ENCODE measurements at regions of chr4 and their contacts with region 1.

Region 1: DNA sequence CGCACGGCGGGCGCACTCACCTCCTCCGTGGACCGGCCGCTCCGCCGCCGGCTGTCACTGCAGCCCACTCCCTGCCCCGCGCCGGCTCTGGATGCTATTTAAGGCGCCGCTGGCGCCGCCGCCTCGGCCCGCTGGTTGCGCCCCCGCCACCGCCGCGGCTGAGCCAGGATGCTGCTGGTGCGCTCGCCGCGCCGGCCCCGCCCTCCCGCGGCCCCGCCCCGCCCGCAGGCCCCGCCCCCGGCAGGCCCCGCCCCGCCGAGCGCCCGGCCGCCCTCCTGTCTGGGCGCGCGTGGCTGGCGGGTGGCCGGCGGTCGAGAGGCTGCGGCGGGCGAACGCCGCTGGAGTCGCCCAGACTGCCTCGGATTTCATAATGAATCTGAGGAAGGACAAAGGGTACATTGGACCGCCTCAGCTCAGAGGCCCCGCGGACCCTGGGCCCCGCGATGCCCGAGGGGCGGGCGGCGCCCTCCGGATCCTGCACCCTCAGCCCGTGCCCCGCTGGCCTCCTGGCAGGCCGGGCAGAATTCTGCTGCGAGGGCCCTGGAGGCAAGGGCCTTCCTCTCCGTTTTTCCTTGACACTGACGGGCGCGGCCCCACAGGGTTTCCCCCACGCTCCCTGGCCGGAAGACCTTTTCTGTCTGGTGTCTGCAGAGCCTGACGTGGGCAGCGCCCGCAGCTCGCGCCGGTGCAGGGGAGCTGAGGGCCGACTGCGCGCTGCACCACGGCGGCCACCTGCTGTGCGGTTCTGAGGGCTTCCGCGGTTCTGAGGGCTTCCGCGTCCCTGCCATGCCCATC is at the start of gene ACSL1:
- DNase-seq: peak; percentile 48 to 88 (median 77)
- ATAC-seq: peak; percentile 84
- H3K4me3 ChIP-seq: peak within 1 kb of the TSS; percentile 56 to 78
- H3K4me3 Mint-ChIP-seq: peak within 1 kb of the TSS; percentile 91
- H3K27ac ChIP-seq: peak within 1 kb of the TSS; percentile 31 to 54
- H3K27ac Mint-ChIP-seq: peak within 1 kb of the TSS; percentile 90
- H3K4me1 ChIP-seq: peaks cover 22% of the 10 kb centered on the region
- H3K4me1 Mint-ChIP-seq: peaks cover 39% of the 10 kb centered on the region
- H3K27me3 ChIP-seq: no peaks in the 10 kb centered on the region
- H3K27me3 Mint-ChIP-seq: no peaks in the 10 kb centered on the region
- CTCF ChIP-seq: no peak
- total RNA-seq, gene ACSL1: 18.4 to 21.3 TPM

Region 2: DNA sequence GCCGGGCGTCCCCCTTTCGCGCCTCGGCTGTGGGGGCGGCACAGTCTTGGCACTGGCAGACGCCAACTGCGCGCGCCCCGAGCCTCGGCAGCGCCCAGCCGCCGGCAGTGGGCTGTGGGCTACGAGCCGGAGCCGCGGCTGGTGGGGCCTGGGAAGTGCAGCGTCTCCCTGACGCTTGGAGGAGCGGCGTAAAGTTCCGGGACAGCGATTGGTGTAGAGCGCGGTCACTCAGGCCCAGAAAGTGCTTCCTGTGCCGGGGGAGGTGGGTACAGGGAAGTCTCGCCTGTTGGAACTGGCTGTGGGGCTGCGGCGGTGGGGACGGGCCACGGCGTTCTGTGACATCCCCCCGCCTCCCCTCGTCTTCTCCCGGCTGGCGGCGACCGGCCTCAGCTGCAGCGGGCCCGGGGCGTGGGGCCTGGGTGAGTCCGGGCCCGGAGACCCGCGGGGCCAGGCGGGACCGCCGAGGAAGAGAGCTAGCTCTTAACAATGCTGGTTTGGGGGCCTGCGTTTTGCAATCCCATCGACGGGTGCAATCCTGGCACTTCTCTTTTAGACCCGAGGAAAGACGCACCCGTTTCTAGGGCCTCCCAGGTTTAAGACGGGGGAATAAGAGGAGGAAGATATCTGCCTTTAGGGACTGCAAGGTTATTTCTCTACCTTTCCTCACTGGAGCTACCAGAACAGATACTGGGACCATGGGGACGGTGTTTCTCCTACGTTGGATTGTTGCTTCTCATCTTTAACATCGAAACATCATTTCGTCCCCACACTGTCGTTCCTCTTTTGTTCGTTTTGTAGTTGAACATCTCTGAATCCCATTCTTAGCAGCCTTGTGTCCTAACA is 1166.8 kb before region 1 on chr4 and contains the starts of genes RWDD4 and TRAPPC11:
- CTCF ChIA-PET with region 1: no interaction called
- POLR2A ChIA-PET with region 1: no interaction called
- intact Hi-C with region 1: loop called in 1 of 2 experiments (anchors 5 kb)
- DNase-seq: peak; percentile 90 to 99 (median 95)
- ATAC-seq: peak; percentile 96
- H3K4me3 ChIP-seq: peak within 1 kb of the TSS; percentile 72 to 83
- H3K4me3 Mint-ChIP-seq: peak within 1 kb of the TSS; percentile 92
- H3K27ac ChIP-seq: peak within 1 kb of the TSS; percentile 83 to 89
- H3K27ac Mint-ChIP-seq: peak within 1 kb of the TSS; percentile 91
- H3K4me1 ChIP-seq: peaks cover 25% of the 10 kb centered on the region
- H3K4me1 Mint-ChIP-seq: peaks cover 42% of the 10 kb centered on the region
- H3K27me3 ChIP-seq: no peaks in the 10 kb centered on the region
- H3K27me3 Mint-ChIP-seq: no peaks in the 10 kb centered on the region
- CTCF ChIP-seq: no peak
- total RNA-seq, gene RWDD4: 9.0 to 12.1 TPM
- total RNA-seq, gene TRAPPC11: 14.7 to 22.1 TPM

Region 3: DNA sequence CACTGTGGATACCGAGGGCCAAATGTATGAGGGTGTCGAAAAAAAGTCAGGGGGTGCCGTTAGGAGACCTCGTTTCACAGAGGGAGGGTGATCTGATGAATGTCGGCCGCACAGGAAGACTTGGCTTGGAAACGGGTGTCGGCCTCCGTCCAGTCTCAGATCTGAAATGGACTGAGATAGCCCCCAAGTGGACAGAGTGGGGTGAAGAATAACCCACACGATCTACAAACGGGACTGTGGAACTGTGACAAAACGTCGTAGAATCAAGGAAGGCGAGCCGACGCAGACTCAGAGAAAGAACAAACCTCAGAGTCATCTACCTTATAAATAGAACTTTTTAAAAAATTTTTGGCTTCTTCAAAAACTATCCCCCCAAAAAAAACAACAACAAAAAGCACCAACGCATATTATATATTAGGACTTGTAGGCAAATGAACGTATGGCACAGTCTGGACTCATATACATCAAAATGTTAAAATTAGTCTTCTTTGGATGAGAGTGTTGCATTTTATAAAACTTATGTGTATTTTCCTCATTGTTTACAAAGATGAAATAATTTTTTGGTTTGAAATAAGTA is 288.0 kb before region 1 on chr4:
- CTCF ChIA-PET with region 1: no interaction called
- POLR2A ChIA-PET with region 1: no interaction called
- intact Hi-C with region 1: loop called (anchors 2 kb)
- DNase-seq: peak; percentile 38 to 88 (median 65)
- ATAC-seq: peak; percentile 45
- H3K4me3 ChIP-seq: peak overlapping the region; percentile 57 to 63
- H3K4me3 Mint-ChIP-seq: peak overlapping the region; percentile 91
- H3K27ac ChIP-seq: peak overlapping the region; percentile 84 to 90
- H3K27ac Mint-ChIP-seq: peak overlapping the region; percentile 100
- H3K4me1 ChIP-seq: peaks cover 33% of the 10 kb centered on the region
- H3K4me1 Mint-ChIP-seq: peaks cover 46% of the 10 kb centered on the region
- H3K27me3 ChIP-seq: no peaks in the 10 kb centered on the region
- H3K27me3 Mint-ChIP-seq: no peaks in the 10 kb centered on the region
- CTCF ChIP-seq: peak; percentile 36

Region 4: DNA sequence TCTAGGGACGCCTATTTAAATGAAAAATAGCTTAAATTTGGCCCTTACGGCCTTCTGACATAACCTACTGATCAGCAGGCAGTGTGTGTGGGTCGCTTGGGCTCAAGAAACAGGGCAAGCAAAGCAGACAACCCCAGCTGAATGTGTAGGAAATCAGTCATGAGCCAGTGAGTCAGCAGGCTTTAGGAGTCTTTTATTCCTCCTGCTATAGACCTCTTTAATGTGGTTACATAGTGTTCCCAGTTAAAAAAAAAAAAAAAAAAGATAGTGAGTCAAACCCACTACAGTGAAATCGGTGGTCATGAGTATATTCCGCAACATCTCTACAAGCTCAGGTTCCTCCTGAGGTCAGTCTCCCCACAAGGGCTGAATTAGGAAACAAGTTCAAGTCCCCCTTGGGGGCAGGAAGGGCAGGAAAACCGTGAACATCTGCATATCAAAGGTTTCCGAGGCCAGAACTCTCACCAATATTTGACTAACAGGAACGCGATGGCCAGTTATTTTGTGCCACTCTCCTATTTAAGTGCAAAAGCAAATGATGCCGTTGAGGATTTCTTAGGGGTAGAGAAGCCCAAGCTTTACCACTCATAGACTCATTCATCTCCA is 33.0 kb before region 1 on chr4:
- CTCF ChIA-PET with region 1: no interaction called
- POLR2A ChIA-PET with region 1: no interaction called
- intact Hi-C with region 1: loop called in 1 of 2 experiments (anchors 5 kb)
- DNase-seq: peak in 5 of 9 experiments; percentile 10 to 46 (median 35)
- ATAC-seq: peak; percentile 76
- H3K4me3 ChIP-seq: no peak overlapping the region
- H3K4me3 Mint-ChIP-seq: no peak overlapping the region
- H3K27ac ChIP-seq: no peak overlapping the region
- H3K27ac Mint-ChIP-seq: no peak overlapping the region
- H3K4me1 ChIP-seq: peaks cover 9% of the 10 kb centered on the region
- H3K4me1 Mint-ChIP-seq: peaks cover 19% of the 10 kb centered on the region
- H3K27me3 ChIP-seq: no peaks in the 10 kb centered on the region
- H3K27me3 Mint-ChIP-seq: no peaks in the 10 kb centered on the region
- CTCF ChIP-seq: no peak

Region 5: DNA sequence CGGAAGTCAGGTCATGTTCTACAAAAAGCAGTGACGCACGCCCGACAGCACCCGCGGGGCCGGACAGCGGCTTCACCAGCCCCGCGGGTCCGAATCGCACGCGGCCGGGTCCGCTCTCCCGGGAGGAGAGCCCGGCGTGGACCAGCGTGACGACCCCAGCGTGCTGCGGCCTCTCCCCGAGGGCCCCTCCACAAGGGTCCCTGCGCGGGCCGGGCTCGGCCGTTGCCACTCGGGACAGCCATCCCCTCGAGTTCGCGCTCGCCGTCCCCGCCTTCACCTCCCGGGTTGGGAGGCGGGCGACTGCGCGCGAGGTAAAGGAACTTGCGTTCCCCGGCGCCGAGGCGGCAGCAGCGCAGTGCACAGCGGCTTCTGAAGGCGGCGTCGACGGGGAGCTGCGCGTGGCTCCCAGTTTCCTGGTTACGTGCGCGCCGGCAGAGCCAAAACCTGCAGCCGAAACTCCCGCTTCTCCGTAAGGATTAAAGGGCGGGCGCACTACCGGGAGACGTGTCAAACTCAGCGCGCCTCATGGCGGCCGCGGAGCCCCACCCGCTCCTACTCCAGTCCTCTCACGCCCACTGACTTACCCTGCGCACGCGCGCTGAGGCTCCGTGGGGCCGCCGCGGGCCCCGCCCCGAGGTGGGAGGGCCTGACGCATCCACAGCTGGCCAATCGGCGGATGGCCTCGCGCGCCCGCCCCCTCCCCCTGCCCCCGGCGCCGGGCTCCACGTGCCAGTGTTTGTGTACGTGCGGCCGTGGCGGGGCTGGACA is 570.0 kb after region 1 on chr4:
- CTCF ChIA-PET with region 1: no interaction called
- POLR2A ChIA-PET with region 1: no interaction called
- intact Hi-C with region 1: loop called in 1 of 2 experiments (anchors 10 kb)
- DNase-seq: peak; percentile 91 to 98 (median 95)
- ATAC-seq: peak; percentile 92
- H3K4me3 ChIP-seq: peak overlapping the region; percentile 73 to 95
- H3K4me3 Mint-ChIP-seq: peak overlapping the region; percentile 95
- H3K27ac ChIP-seq: peak overlapping the region; percentile 98 to 99
- H3K27ac Mint-ChIP-seq: peak overlapping the region; percentile 99
- H3K4me1 ChIP-seq: peaks cover 16% of the 10 kb centered on the region
- H3K4me1 Mint-ChIP-seq: peaks cover 20% of the 10 kb centered on the region
- H3K27me3 ChIP-seq: no peaks in the 10 kb centered on the region
- H3K27me3 Mint-ChIP-seq: no peaks in the 10 kb centered on the region
- CTCF ChIP-seq: no peak

Measured in CD8-positive, alpha-beta T cell (primary cell).